ENCODE measurements at regions of chr11 and their contacts with region 1.

Region 1: GRCh38 chr11:35082321-35083182 is 56.4 kb upstream of the CD44 start:
- DNase-seq: peak; percentile 83
- ATAC-seq: peak; percentile 85
- H3K4me3 ChIP-seq: peak overlapping the region; percentile 42; the same call in 1 of the 2 replicates
- H3K27ac ChIP-seq: peak overlapping the region; percentile 75
- H3K4me1 ChIP-seq: peaks cover 48% of the 10 kb centered on the region
- H3K27me3 ChIP-seq: no peaks in the 10 kb centered on the region
- CTCF ChIP-seq: no peak; a peak in 1 of 6 replicates
- EP300 ChIP-seq: peak; percentile 48 to 49; a peak in 1 of 4 replicates
- POLR2A ChIP-seq: peak; percentile 71
- RAD21 ChIP-seq: no peak

Region 2: DNA sequence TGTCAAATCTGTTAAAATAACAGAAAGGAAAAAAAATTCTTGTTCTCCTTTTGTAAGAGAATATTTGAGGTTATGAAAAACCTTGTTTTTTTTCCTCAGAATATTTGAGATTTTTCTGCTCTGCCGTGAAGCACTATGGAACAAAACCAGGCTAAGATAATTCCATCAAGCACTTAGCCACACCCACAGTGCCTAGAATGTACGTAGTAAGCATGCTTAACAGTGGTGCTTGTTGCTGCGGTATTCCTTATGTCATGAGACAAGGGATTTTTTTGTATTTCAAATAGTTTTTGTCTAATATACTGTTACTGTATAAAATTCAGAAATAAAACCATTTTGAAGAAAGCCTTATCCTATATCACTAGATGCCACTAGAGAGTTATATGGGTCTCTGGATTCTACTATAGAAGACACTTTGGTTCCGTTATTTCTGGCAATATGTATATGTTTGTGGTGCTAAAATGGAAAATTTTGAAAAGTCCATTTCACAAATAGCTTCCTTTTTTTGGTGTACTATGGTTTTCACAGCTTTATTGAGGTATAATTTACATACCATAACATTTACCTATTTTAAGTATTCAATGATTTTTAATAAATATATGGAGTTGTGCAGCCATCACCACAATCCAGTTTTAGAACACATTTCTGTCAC is 142.4 kb before region 1 on chr11:
- CTCF ChIA-PET with region 1: no interaction called
- POLR2A ChIA-PET with region 1: no interaction called
- RAD21 ChIA-PET with region 1: no interaction called
- SMC1A ChIA-PET with region 1: no interaction called
- in situ Hi-C with region 1: no loop called
- intact Hi-C with region 1: no loop called
- DNase-seq: no peak
- ATAC-seq: peak; percentile 61
- H3K4me3 ChIP-seq: no peak overlapping the region
- H3K27ac ChIP-seq: no peak overlapping the region
- H3K4me1 ChIP-seq: no peaks in the 10 kb centered on the region; the same call in 1 of the 2 replicates
- H3K27me3 ChIP-seq: no peaks in the 10 kb centered on the region
- CTCF ChIP-seq: peak in 2 of 3 experiments; percentile 8 to 27; a peak in 1 of 6 replicates
- EP300 ChIP-seq: no peak
- POLR2A ChIP-seq: no peak
- RAD21 ChIP-seq: peak; percentile 46

Region 3: DNA sequence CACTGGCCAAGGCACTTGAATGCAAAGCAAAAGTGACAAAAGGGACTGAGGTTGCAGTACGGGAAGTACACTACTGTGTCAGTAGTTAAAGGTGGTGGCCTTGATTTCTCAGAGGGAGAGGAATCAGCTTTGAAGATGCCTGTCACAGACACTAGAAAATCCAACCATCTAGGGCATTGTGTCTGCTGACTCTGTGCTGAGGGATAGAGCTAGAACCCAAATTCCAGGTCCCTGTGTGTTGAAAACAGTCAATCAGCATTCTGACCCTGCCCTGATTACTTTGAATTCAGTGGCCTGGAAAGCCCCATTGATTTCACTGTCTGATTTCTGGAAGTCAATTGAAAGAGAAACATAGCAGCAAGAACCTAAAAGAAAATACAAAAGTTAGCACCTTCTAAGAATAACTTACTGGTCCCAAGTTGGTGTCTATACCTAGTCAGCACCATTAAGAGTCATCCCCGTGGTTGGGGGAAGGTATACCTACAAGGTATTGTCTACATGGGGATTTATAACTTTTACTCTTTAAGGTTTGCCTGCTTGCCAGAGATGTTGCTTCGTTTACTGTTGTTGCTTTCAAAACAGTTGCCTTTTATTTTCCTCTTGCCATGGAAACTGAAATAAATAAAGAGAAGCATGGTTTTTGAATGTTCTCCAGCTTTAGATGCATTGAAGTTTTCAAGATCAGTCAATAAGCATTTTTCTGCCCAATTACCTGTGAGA is 68.9 kb before region 1 on chr11:
- CTCF ChIA-PET with region 1: interaction called, 3 read pairs
- POLR2A ChIA-PET with region 1: no interaction called
- RAD21 ChIA-PET with region 1: interaction called, 5 read pairs
- SMC1A ChIA-PET with region 1: interaction called, 4 read pairs
- in situ Hi-C with region 1: loop called (anchors 5 kb)
- intact Hi-C with region 1: loop called (anchors 2 kb)
- DNase-seq: no peak
- ATAC-seq: peak; percentile 73
- H3K4me3 ChIP-seq: peak overlapping the region; percentile 11; the same call in 1 of the 2 replicates
- H3K27ac ChIP-seq: peak overlapping the region; percentile 73
- H3K4me1 ChIP-seq: peaks cover 22% of the 10 kb centered on the region
- H3K27me3 ChIP-seq: no peaks in the 10 kb centered on the region
- CTCF ChIP-seq: no peak
- EP300 ChIP-seq: peak; percentile 58 to 63; a peak in 3 of 4 replicates
- POLR2A ChIP-seq: no peak
- RAD21 ChIP-seq: 0 out of 2 replicates have a peak, but pooled peaks have one; percentile 10

Region 4: DNA sequence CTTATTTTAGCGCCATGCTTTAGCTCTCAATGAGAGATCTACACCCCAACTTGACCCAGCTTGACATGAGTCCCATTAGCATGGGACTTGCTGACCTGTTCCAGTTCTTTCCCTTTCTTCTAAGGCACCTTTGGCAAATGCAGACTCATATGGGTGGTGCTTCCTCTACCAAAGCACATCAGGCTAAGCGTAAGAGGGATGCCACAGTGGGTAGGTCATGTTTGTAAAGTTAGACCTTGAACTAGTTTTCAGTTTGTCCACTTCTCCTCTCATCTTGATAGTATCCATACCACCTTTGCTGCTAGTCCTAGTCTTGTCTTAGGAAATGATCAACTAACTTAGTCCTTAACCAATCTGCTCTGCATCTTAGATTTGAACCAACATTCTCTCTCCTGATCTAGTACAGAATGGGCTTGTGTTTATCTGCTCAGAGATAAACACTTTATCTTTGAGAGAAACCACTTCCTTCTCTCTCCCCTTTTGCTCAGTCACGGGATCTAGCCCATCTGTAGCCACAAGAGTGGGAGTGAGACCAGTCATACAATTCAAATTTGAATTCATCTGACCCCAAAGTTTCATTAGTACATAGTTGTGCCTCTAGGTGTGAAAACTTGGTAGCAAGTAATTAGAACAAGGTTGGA is 15.6 kb before region 1 on chr11:
- CTCF ChIA-PET with region 1: interaction called, 3 read pairs
- POLR2A ChIA-PET with region 1: interaction called, 3 read pairs
- RAD21 ChIA-PET with region 1: interaction called, 4 read pairs
- SMC1A ChIA-PET with region 1: interaction called, 38 read pairs
- in situ Hi-C with region 1: no loop called
- intact Hi-C with region 1: no loop called
- DNase-seq: no peak
- ATAC-seq: peak; percentile 92
- H3K4me3 ChIP-seq: no peak overlapping the region
- H3K27ac ChIP-seq: no peak overlapping the region
- H3K4me1 ChIP-seq: peaks cover 14% of the 10 kb centered on the region
- H3K27me3 ChIP-seq: no peaks in the 10 kb centered on the region
- CTCF ChIP-seq: no peak
- EP300 ChIP-seq: peak; percentile 74 to 76
- POLR2A ChIP-seq: no peak
- RAD21 ChIP-seq: no peak

Region 5: GRCh38 chr11:35116762-35117640 is 34.4 kb after region 1 on chr11:
- CTCF ChIA-PET with region 1: interaction called, 4 read pairs
- POLR2A ChIA-PET with region 1: interaction called, 3 read pairs
- RAD21 ChIA-PET with region 1: no interaction called
- SMC1A ChIA-PET with region 1: interaction called, 8 read pairs
- in situ Hi-C with region 1: no loop called
- intact Hi-C with region 1: loop called (anchors 2 kb)
- DNase-seq: no peak
- ATAC-seq: no peak
- H3K4me3 ChIP-seq: no peak overlapping the region
- H3K27ac ChIP-seq: no peak overlapping the region
- H3K4me1 ChIP-seq: peaks cover 53% of the 10 kb centered on the region
- H3K27me3 ChIP-seq: no peaks in the 10 kb centered on the region
- CTCF ChIP-seq: no peak
- EP300 ChIP-seq: no peak
- POLR2A ChIP-seq: no peak
- RAD21 ChIP-seq: no peak

Region 6: GRCh38 chr11:35126000-35126878 is 43.7 kb after region 1 on chr11:
- CTCF ChIA-PET with region 1: interaction called, 3 read pairs
- POLR2A ChIA-PET with region 1: interaction called, 8 read pairs
- RAD21 ChIA-PET with region 1: interaction called, 4 read pairs
- SMC1A ChIA-PET with region 1: interaction called, 4 read pairs
- in situ Hi-C with region 1: no loop called
- intact Hi-C with region 1: loop called (anchors 1 kb)
- DNase-seq: peak; percentile 88
- ATAC-seq: peak; percentile 84
- H3K4me3 ChIP-seq: peak overlapping the region; percentile 0; the same call in 1 of the 2 replicates
- H3K27ac ChIP-seq: peak overlapping the region; percentile 77
- H3K4me1 ChIP-seq: peaks cover 60% of the 10 kb centered on the region
- H3K27me3 ChIP-seq: no peaks in the 10 kb centered on the region
- CTCF ChIP-seq: peak; percentile 10 to 36 (median 14); a peak in 3 of 6 replicates
- EP300 ChIP-seq: peak; percentile 71 to 87
- POLR2A ChIP-seq: peak; percentile 63
- RAD21 ChIP-seq: peak; percentile 54

Measured in GM12878 (cell line).